AG04450 (cell line): ENCODE measurements at regions of chr1 and their contacts with region 1.

Region 1: GRCh38 chr1:149886396-149887195 is 12.8 kb upstream of the BOLA1 start:
- DNase-seq: peak; percentile 99
- H3K4me3 ChIP-seq: peak overlapping the region; percentile 77
- H3K27ac ChIP-seq: peak overlapping the region; percentile 99
- H3K27me3 ChIP-seq: no peaks in the 10 kb centered on the region
- CTCF ChIP-seq: no peak

Region 2: DNA sequence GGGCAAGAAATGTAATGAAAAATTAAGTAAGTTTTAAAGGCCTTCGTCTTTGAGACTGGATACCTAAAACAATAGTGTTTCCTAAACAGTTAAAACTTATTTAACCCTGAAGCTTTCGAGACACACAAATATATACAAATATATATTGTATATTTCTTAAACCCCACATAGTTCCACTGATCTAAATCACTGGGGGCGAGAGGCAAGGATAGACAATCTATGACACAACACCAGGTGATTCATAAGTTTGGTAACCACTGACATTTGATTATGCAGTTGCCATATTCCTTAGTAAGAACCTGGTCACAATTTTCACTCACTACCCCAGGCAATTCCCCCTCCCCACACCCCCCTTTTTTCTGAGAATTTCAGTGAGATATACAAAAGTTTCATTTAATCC is 42.5 kb before region 1 on chr1:
- CTCF ChIA-PET with region 1: interaction called, 3 read pairs
- POLR2A ChIA-PET with region 1: interaction called, 38 read pairs
- DNase-seq: no peak
- H3K4me3 ChIP-seq: peak overlapping the region; percentile 69
- H3K27ac ChIP-seq: no peak overlapping the region
- H3K27me3 ChIP-seq: no peaks in the 10 kb centered on the region
- CTCF ChIP-seq: no peak

Region 3: DNA sequence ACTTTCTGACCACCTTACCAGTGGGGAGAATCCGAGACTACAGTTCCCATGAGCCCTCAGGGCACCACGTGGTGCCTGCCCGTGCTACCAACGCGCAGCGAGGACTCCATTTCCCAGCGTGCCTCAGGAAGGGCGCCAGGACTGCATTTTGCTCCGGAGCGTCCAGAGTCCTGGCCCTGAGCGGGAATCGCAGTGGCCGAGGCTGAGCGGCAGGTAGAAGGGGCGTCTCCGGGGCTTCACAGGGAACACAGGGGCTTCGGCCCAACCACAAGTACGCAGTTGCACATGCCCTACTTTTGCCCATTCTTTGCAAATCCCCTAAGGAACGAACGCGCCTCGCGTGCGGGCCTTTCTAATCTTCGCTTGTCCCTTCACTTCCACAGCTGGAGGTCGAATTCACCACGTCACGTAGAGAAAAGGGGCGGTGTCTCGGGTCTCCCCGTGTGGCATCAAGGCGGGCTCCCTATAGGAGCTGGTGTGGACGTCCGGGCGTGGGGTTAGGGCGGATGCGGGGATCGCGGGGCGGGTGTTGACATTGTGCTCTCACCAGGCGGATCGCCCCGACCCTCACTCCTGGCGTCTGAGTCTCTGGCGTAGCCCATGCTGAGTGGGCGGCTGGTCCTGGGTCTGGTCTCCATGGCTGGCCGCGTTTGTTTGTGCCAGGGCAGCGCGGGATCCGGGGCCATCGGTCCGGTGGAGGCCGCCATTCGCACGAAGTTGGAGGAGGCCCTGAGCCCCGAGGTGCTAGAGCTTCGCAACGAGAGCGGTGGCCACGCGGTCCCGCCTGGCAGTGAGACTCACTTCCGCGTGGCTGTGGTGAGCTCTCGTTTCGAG is 13.1 kb after region 1 on chr1 and contains the start of gene BOLA1:
- CTCF ChIA-PET with region 1: interaction called, 3 read pairs
- POLR2A ChIA-PET with region 1: interaction called, 23 read pairs
- DNase-seq: peak; percentile 70
- H3K4me3 ChIP-seq: peak within 1 kb of the TSS; percentile 70
- H3K27ac ChIP-seq: peak within 1 kb of the TSS; percentile 75
- H3K27me3 ChIP-seq: no peaks in the 10 kb centered on the region
- CTCF ChIP-seq: no peak
- polyA plus RNA-seq, gene BOLA1: 10.1 and 11.8 TPM in 2 replicates

Region 4: GRCh38 chr1:149937060-149937705 is 50.6 kb after region 1 on chr1:
- CTCF ChIA-PET with region 1: no interaction called
- POLR2A ChIA-PET with region 1: interaction called, 20 read pairs
- DNase-seq: no peak
- H3K4me3 ChIP-seq: peak overlapping the region; percentile 89
- H3K27ac ChIP-seq: peak overlapping the region; percentile 25
- H3K27me3 ChIP-seq: no peaks in the 10 kb centered on the region
- CTCF ChIP-seq: peak; percentile 31

Region 5: DNA sequence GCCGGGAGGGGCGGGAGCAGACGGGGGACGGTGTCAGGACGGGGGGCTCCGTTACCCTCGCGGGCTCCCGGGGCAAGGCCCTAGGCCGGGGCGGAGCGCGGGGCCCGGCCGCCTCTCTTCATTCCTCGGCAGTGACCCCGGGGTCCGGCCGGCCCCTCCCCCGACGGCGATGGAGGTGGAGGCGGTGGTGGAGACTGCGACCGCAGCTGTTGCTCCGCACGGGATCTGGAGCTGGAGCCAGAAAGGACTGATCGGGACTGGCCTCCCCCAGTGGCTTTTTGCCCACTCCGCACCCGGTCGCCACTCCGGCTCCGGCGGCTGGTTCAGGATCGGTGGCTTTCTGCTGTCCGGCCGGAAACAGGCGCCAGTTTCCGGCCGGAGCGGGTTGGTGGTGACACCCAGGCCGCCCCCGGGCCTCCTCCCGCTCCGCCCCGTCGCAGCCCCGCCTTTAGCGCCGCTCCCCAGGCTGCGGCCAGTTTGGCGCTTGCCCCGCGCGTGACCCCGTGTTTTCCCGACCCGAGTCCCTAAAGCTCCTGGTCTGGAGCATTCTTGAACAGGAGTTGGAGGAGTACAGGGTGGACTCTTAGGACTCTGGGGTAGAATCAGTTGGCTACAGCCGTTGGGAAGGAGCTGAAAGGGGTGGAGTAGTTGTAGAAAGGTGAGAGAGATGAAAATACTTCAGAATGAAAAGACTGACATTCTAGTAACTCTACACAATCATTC is 124.0 kb after region 1 on chr1 and contains the start of gene OTUD7B:
- CTCF ChIA-PET with region 1: no interaction called
- POLR2A ChIA-PET with region 1: interaction called, 11 read pairs
- DNase-seq: peak; percentile 63
- H3K4me3 ChIP-seq: peak within 1 kb of the TSS; percentile 94
- H3K27ac ChIP-seq: peak within 1 kb of the TSS; percentile 96
- H3K27me3 ChIP-seq: no peaks in the 10 kb centered on the region
- CTCF ChIP-seq: no peak
- polyA plus RNA-seq, gene OTUD7B: 10.7 and 11.5 TPM in 2 replicates